Ascending aorta (tissue), 2 donors: ENCODE measurements at regions of chr4 and their contacts with region 1.

Region 1: DNA sequence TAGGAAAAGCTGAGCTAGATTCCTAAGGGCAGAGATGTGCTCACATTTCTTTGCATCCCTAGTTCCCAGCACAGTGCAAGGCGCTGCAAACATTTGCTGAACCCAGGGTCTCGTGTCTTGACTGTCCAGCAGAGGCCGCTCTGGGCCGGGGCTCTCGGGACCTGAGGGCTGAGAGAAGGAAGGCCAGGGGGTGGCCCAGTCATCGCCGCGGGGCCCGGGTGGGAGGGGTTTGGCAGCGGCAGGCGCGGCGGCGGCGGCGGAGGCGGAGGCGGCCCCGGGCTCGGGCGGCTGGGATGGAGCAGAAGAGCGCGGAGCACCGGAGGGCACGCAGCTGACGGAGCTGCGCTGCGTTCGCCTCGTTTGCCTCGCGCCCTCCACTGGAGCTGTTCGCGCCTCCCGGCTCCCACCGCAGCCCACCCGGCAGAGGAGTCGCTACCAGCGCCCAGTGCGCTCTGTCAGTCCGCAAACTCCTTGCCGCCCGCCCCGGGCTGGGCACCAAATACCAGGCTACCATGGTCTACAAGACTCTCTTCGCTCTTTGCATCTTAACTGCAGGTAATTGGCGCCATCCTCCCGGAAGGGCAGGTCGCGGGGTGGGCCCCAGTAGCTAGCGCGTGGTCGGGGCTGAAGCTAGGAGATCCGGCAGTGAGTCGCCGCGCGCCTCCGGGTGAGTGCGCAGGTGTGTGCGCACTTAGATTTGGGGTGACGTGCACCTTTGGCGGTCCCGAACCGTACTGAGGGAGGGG is at the start of gene PARM1:
- DNase-seq: peak; percentile 43 to 95
- H3K4me3 ChIP-seq: peak within 1 kb of the TSS; percentile 72 to 77
- H3K27ac ChIP-seq: peak within 1 kb of the TSS; percentile 87 to 89
- H3K4me1 ChIP-seq: peaks cover 0 to 2% of the 10 kb centered on the region in 2 donors
- H3K27me3 ChIP-seq: no peaks in the 10 kb centered on the region
- CTCF ChIP-seq: peak; percentile 81 to 88 (median 86)
- total RNA-seq, gene PARM1: 116 TPM

Region 2: DNA sequence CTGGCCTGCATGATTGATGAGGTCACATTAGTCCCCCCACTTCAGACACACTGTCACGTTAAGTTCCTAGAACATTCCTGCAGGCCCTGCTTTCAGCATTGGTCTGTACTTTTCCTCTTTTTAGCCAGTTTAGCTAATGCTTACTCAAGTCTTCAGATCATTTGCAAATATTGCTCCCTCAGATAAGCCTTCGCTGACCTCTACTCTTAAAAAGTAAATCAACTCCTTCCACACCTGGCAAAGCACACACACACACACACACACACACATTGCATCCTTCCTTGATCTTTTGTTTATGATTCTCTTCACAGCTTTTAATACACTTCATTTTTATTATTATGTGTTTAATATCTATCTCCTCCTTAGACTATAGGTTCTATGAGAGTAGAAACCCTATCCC is 31.3 kb after region 1 on chr4:
- intact Hi-C with region 1: loop called (anchors 2 kb)
- DNase-seq: no peak
- H3K4me3 ChIP-seq: no peak overlapping the region
- H3K27ac ChIP-seq: peak overlapping the region in 1 of 2 donors; percentile 75
- H3K4me1 ChIP-seq: peaks cover 0 to 11% of the 10 kb centered on the region in 2 donors
- H3K27me3 ChIP-seq: no peaks in the 10 kb centered on the region
- CTCF ChIP-seq: no peak

Region 3: GRCh38 chr4:75142850-75143249 is 209.9 kb after region 1 on chr4:
- intact Hi-C with region 1: loop called (anchors 5 kb)
- DNase-seq: no peak
- H3K4me3 ChIP-seq: no peak overlapping the region
- H3K27ac ChIP-seq: peak overlapping the region; percentile 52 to 54
- H3K4me1 ChIP-seq: peaks cover 0 to 3% of the 10 kb centered on the region in 2 donors
- H3K27me3 ChIP-seq: no peaks in the 10 kb centered on the region
- CTCF ChIP-seq: no peak

Region 4: DNA sequence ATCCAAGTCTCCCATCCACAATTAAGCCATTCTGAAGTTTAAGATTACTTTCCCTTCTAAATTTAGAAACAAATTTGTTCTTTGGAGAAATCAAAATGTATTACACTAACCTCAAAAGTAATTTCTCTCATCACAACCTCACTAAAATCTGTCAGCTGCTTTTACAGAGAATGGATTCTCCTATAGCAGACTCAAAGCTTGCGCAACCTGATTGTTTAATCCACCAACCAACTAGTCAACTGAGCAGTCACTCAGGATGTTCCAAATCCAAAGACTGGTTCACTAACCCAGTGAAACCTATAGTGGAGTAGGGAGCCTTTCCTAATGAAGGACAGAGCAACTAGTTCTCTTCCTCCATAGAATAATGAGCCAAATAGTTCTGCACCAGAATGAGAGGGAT is 536.9 kb after region 1 on chr4:
- intact Hi-C with region 1: loop called (anchors 2 kb)
- DNase-seq: no peak
- H3K4me3 ChIP-seq: no peak overlapping the region
- H3K27ac ChIP-seq: no peak overlapping the region
- H3K4me1 ChIP-seq: no peaks in the 10 kb centered on the region
- H3K27me3 ChIP-seq: no peaks in the 10 kb centered on the region
- CTCF ChIP-seq: no peak

Region 5: GRCh38 chr4:75514131-75514948 is 581.4 kb after region 1 on chr4 and contains the starts of genes RCHY1 and THAP6:
- intact Hi-C with region 1: loop called (anchors 2 kb)
- DNase-seq: peak; percentile 79 to 98
- H3K4me3 ChIP-seq: peak within 1 kb of the TSS; percentile 85 to 90
- H3K27ac ChIP-seq: peak within 1 kb of the TSS; percentile 92 to 95
- H3K4me1 ChIP-seq: peaks cover 8 to 32% of the 10 kb centered on the region in 2 donors
- H3K27me3 ChIP-seq: no peaks in the 10 kb centered on the region
- CTCF ChIP-seq: no peak
- total RNA-seq, gene RCHY1: 16.2 TPM
- total RNA-seq, gene THAP6: 2.4 TPM